ENCODE measurements at regions of chr16 and their contacts with region 1.

Region 1: DNA sequence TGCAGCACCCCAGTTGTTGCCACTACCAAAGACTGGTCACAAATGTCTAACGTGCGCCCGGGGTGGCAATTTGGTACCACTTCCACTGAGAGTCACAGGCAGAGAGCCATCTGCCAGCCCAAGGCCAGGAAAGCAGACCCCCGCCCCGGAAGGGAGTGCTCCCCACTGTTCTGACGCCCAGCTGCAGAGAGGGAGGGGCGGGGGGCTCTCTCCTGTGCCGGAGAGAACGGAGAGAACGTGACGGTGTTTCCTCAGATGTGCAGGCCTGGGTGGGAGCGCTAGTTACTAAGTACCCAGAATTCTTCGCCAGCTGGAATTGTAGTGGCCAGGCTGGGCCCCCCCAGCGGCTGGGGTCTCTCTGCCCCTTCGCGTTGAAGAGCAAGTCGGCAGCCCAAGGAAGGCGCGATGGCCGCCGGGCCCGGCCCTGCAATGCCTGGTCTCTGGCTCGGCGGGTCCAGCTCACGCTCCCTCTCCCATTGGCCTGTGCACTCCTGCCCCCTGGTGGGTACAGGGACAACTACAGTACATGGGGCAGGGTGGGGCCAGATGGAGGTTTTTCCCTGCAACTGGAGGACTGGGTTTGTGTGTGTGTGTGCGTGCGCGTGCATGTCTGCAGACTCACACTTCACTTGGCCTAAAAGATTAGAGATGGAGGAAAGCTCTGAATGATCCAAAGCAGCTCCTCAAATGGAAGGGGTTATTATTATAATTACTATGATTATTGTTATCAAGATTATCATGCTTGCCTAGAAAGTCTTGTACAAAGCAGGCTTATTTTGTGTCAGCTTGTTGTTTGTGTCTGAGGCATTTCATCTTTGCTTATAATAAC is 107.1 kb downstream of the AMFR start:
- DNase-seq: peak; percentile 79
- H3K4me3 Mint-ChIP-seq: no peak overlapping the region
- H3K27ac Mint-ChIP-seq: no peak overlapping the region
- H3K4me1 Mint-ChIP-seq: no peaks in the 10 kb centered on the region
- H3K27me3 Mint-ChIP-seq: peaks cover 30% of the 10 kb centered on the region
- CTCF ChIP-seq: peak; percentile 96

Region 2: GRCh38 chr16:55853114-55853513 is 465.1 kb before region 1 on chr16:
- CTCF ChIA-PET with region 1: interaction called, 3 read pairs
- POLR2A ChIA-PET with region 1: no interaction called
- intact Hi-C with region 1: loop called (anchors 10 kb)
- DNase-seq: peak; percentile 32
- H3K4me3 Mint-ChIP-seq: no peak overlapping the region
- H3K27ac Mint-ChIP-seq: no peak overlapping the region
- H3K4me1 Mint-ChIP-seq: no peaks in the 10 kb centered on the region
- H3K27me3 Mint-ChIP-seq: peaks cover 37% of the 10 kb centered on the region
- CTCF ChIP-seq: no peak

Region 3: GRCh38 chr16:56041686-56042085 is 276.5 kb before region 1 on chr16:
- CTCF ChIA-PET with region 1: interaction called, 50 read pairs
- POLR2A ChIA-PET with region 1: interaction called, 4 read pairs
- intact Hi-C with region 1: loop called (anchors 1 kb)
- DNase-seq: peak; percentile 57
- H3K4me3 Mint-ChIP-seq: no peak overlapping the region
- H3K27ac Mint-ChIP-seq: no peak overlapping the region
- H3K4me1 Mint-ChIP-seq: no peaks in the 10 kb centered on the region
- H3K27me3 Mint-ChIP-seq: peaks cover 34% of the 10 kb centered on the region
- CTCF ChIP-seq: peak; percentile 47

Region 4: GRCh38 chr16:56294579-56294978 is 23.6 kb before region 1 on chr16:
- CTCF ChIA-PET with region 1: interaction called, 12 read pairs
- POLR2A ChIA-PET with region 1: no interaction called
- intact Hi-C with region 1: no loop called
- DNase-seq: peak; percentile 33
- H3K4me3 Mint-ChIP-seq: no peak overlapping the region
- H3K27ac Mint-ChIP-seq: no peak overlapping the region
- H3K4me1 Mint-ChIP-seq: peaks cover 15% of the 10 kb centered on the region
- H3K27me3 Mint-ChIP-seq: no peaks in the 10 kb centered on the region
- CTCF ChIP-seq: no peak

Measured in MCF 10A (cell line).